Left cardiac atrium (tissue), 4 donors: ENCODE measurements at regions of chr7 and their contacts with region 1.

Region 1: GRCh38 chr7:110090110-110090769 is 1000.7 kb upstream of the LRRN3 start:
- DNase-seq: no peak
- ATAC-seq: no peak

Region 2: DNA sequence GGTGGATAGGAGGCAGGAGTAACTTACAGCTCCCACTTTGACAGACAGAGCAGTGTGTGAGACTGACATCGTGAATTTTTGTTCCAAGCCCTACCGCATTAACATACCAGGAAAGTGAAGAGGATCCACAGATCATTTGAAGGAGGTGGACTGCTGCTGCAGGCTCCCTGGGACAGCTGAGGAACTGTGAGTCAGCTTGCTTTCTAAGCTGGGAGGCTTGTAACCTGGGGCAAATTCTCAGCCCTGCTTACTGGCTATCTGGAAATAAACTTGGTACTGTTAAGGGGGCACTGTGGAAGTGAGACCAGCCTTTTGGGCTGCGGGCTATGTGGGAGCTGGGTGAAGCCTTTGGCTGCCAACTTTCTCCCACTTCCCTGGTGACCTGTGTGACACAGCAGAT is 318.1 kb before region 1 on chr7:
- intact Hi-C with region 1: no loop called
- DNase-seq: no peak
- ATAC-seq: no peak

Region 3: DNA sequence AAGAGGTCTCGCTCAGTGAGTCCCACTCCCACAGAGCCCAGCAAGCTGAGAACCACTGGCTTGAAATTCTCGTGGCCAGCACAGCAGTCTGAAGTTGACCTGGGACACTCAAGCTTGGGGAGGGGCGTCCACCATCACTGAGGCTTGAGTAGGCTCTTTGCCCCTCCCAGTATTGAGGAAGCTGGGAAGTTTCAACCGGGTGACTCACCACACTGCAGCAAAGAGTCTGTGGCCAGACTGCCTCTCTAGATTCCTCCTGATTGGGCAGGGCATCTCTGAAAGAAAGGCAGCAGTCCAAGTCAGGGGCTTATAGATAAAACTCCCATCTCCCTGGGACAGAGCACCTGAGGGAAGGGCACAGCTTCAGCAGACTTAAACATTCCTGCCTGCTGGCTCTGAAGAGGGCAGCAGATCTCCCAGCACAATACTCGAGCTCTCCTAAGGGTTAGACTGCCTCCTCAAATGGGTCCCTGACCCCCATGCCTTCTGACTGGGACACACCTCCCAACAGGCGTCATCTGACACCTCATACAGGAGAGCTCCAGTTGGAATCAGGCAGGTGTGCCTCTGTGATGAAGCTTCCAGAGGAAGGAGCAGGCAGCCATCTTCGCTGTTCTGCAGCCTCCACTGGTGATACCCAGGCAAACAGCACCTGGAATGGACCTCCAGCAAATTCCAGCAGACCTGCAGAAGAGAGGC is 29.8 kb after region 1 on chr7:
- intact Hi-C with region 1: no loop called
- DNase-seq: no peak
- ATAC-seq: no peak

Region 4: GRCh38 chr7:110283082-110283481 is 192.8 kb after region 1 on chr7:
- intact Hi-C with region 1: loop called in 1 of 2 experiments (anchors 5 kb)
- DNase-seq: no peak
- ATAC-seq: no peak

Region 5: GRCh38 chr7:111043533-111043932 is 953.3 kb after region 1 on chr7:
- intact Hi-C with region 1: no loop called
- DNase-seq: no peak
- ATAC-seq: no peak